AG04450 (cell line): ENCODE measurements at regions of chr11 and their contacts with region 1.

Region 1: GRCh38 chr11:67401495-67402191 is at the start of gene PPP1CA:
- DNase-seq: peak; percentile 65
- H3K4me3 ChIP-seq: peak within 1 kb of the TSS; percentile 91
- H3K27ac ChIP-seq: peak within 1 kb of the TSS; percentile 82
- H3K27me3 ChIP-seq: no peaks in the 10 kb centered on the region
- CTCF ChIP-seq: 0 out of 2 replicates have a peak, but pooled peaks have one; percentile 7
- polyA plus RNA-seq, gene PPP1CA: 116 and 140 TPM in 2 replicates

Region 2: GRCh38 chr11:67373925-67374618 is 27.6 kb before region 1 on chr11:
- CTCF ChIA-PET with region 1: interaction called, 13 read pairs
- POLR2A ChIA-PET with region 1: interaction called, 8 read pairs
- DNase-seq: peak; percentile 86
- H3K4me3 ChIP-seq: peak overlapping the region; percentile 67
- H3K27ac ChIP-seq: peak overlapping the region; percentile 99
- H3K27me3 ChIP-seq: no peaks in the 10 kb centered on the region
- CTCF ChIP-seq: peak; percentile 34

Region 3: GRCh38 chr11:67382276-67383136 is 19.1 kb before region 1 on chr11:
- CTCF ChIA-PET with region 1: interaction called, 10 read pairs
- POLR2A ChIA-PET with region 1: no interaction called
- DNase-seq: no peak
- H3K4me3 ChIP-seq: no peak overlapping the region
- H3K27ac ChIP-seq: no peak overlapping the region
- H3K27me3 ChIP-seq: no peaks in the 10 kb centered on the region
- CTCF ChIP-seq: peak; percentile 99

Region 4: DNA sequence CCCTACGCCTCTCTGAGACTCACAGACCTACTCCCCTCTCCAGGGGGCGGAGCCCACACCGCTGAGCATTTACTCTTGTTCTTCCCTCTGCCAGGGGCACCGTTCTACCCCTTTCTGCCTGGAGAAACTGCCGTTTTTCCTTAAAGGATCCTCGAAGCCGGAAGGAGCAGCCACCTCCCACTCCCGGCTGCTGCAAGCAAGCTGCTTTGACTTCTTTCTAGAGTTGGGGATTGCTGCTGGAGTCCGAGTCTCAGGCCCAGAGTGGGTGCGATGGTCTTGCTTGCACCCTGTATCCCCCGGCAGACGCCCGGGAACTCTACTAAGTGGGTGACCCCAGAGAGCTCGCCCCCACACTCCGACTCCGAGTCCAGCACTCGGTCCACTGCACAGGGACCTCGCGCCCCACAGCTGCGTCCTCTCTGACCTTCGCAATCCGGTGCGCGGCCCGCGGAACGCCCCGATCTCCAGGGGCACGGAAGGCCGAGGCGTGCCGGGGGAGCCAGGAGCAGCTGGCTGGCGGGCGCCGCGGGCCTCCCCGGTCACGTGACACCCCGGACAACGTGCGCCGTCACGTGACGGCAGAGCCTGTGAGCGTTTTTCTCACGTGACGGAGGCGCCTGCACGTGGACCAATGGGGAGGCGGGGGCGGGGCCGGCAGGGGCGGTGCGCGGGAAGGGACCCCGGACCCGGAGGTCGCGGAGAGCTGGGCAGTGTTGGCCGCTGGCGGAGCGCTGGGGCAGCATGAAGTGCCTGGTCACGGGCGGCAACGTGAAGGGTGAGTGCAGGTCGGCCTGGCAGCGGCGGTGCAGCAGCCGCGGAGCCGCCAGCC is 10.1 kb before region 1 on chr11 and contains the start of gene RAD9A:
- CTCF ChIA-PET with region 1: interaction called, 22 read pairs
- POLR2A ChIA-PET with region 1: interaction called, 30 read pairs
- DNase-seq: peak; percentile 81
- H3K4me3 ChIP-seq: peak within 1 kb of the TSS; percentile 92
- H3K27ac ChIP-seq: peak within 1 kb of the TSS; percentile 87
- H3K27me3 ChIP-seq: no peaks in the 10 kb centered on the region
- CTCF ChIP-seq: no peak
- polyA plus RNA-seq, gene RAD9A: 3.2 and 4.1 TPM in 2 replicates

Region 5: DNA sequence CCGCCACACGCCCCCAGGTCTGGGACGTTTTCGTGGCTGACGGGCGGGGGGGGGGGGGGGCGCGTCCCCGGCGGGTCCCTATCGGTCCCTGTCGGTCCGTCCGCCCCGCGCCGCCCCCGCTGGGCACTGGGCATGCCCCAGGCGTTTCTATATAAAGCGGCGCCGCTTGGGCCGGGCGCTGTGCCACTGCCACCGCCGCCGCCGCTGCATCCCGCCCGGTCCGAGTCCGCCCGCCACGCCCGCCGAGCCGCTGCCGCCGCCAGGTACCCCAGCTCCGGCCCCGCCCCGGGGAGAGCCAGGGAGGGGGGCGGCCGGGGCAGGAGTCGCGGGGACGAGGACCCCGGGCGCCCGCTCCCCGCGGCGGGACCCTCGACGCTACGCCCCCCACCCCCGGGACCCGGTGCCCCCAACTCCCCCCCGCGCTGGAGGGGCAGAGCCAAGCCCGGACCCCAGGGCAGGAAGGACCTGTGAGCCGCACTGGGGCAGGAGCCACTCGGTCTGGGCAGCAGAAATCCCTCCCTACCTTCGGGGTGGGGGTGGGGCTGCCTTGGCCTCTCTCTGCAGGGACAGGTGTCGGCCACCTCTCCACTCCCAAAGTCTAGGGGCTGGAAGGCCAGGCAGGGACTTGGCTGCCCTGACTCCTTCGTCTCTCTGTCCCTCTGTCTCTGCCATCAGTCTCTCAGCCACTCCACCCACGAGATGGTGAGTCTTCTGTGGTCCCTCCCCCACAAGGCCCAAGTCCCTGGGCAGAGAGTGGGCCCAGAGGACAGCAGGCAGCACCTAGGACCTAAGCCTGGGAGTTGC is 14.1 kb after region 1 on chr11 and contains the start of gene CARNS1:
- CTCF ChIA-PET with region 1: interaction called, 22 read pairs
- POLR2A ChIA-PET with region 1: interaction called, 8 read pairs
- DNase-seq: no peak
- H3K4me3 ChIP-seq: peak within 1 kb of the TSS; percentile 17; the same call in 1 of the 2 replicates
- H3K27ac ChIP-seq: no peak within 1 kb of the TSS
- H3K27me3 ChIP-seq: peaks cover 27% of the 10 kb centered on the region
- CTCF ChIP-seq: no peak
- polyA plus RNA-seq, gene CARNS1: 0.07 and 0.09 TPM in 2 replicates

Region 6: DNA sequence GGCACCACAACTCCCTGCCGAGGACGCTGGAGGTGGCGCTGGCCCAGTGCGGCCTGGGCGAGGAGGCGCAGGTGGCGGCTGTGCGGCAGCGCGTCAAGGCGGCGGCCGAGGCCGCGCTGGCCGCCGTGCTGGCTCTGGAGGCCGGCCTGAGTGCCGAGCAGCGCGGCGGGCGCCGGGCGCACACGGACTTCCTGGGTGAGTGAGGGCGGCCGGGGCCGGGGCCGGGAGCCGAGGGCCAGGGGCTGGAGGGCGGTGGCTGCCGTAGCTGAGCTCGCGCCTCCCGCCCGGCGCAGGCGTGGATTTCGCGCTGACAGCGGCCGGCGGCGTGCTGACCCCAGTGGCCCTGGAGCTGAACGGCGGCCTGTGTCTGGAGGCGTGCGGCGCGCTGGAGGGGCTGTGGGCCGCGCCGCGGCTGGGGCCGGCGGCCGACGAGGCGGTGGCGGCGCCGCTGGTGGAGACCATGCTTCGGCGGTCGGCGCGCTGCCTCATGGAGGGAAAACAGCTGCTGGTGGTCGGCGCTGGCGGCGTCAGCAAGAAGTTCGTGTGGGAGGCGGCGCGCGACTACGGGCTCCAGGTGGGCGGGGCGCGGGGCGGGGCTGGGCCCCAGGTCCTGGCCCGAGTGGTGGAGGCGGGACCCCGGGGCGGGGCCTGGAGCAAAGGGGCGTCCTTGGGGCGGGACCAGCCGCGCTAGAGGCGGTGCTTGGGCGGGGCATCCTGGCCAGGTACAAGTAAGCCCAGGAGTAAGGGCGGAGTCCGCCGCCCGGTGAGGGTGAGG is 19.2 kb after region 1 on chr11:
- CTCF ChIA-PET with region 1: interaction called, 10 read pairs
- POLR2A ChIA-PET with region 1: interaction called, 6 read pairs
- DNase-seq: peak; percentile 47
- H3K4me3 ChIP-seq: peak overlapping the region; percentile 55
- H3K27ac ChIP-seq: peak overlapping the region; percentile 39
- H3K27me3 ChIP-seq: peaks cover 2% of the 10 kb centered on the region
- CTCF ChIP-seq: no peak

Region 7: GRCh38 chr11:67468835-67469811 is 67.5 kb after region 1 on chr11 and contains the start of gene TMEM134:
- CTCF ChIA-PET with region 1: interaction called, 15 read pairs
- POLR2A ChIA-PET with region 1: interaction called, 11 read pairs
- DNase-seq: peak; percentile 69
- H3K4me3 ChIP-seq: peak within 1 kb of the TSS; percentile 71
- H3K27ac ChIP-seq: peak within 1 kb of the TSS; percentile 65
- H3K27me3 ChIP-seq: peaks cover 4% of the 10 kb centered on the region
- CTCF ChIP-seq: peak; percentile 37
- polyA plus RNA-seq, gene TMEM134: 14.7 and 22.5 TPM in 2 replicates